SK-N-SH (cell line): ENCODE measurements at regions of chr1 and their contacts with region 1.

Region 1: DNA sequence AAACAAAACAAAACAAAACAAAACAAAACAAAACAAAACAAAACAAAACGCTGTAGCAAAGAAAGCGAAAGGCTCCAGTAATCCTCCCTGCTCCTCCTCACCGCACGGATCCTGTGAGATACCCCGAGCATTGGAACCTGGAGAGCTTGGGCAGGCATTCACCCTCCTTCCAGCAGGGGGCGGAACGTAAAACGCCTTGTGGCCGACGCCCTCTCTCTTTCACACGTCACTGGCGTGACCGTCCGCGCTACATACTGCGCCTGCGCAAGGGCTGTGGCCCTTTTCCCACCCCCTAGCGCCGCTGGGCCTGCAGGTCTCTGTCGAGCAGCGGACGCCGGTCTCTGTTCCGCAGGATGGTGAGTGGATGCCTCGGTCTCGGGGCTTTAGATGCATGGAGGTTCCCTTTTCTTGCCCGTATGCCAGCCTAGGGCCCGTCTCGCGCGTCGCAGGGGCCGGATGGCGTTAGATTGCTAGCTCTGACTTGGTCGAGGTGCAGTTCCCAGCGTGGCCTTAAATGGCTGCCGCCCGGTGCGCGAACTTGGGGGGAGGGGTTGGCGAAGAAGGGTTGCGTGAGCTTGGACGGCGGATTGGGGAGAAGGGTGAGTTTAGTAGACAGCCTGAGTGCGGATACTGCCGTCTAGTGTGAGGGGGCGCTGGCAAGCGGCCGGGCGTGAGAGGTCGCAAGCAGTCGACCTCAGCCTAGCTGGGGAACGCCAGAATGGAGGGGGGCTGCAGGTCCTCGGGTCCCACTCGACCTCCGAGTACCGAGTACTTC is at the start of gene RPL5:
- DNase-seq: peak; percentile 95
- H3K4me3 ChIP-seq: peak within 1 kb of the TSS; percentile 94 to 99
- H3K27ac ChIP-seq: peak within 1 kb of the TSS; percentile 74 to 97
- H3K4me1 ChIP-seq: peaks cover 15 to 35% of the 10 kb centered on the region in 2 experiments; a peak in 3 of 4 replicates
- H3K27me3 ChIP-seq: no peaks in the 10 kb centered on the region
- CTCF ChIP-seq: peak; percentile 93
- EP300 ChIP-seq: no peak
- RAD21 ChIP-seq: peak; percentile 27; the same call in 1 of the 2 replicates
- polyA plus RNA-seq, gene RPL5: 1,489 and 2,038 TPM in 2 replicates

Region 2: GRCh38 chr1:92764116-92764515 is 67.8 kb before region 1 on chr1:
- CTCF ChIA-PET with region 1: no interaction called
- POLR2A ChIA-PET with region 1: no interaction called
- DNase-seq: no peak
- H3K4me3 ChIP-seq: no peak overlapping the region
- H3K27ac ChIP-seq: no peak overlapping the region
- H3K4me1 ChIP-seq: no peaks in the 10 kb centered on the region
- H3K27me3 ChIP-seq: no peaks in the 10 kb centered on the region
- CTCF ChIP-seq: no peak
- EP300 ChIP-seq: no peak
- RAD21 ChIP-seq: no peak

Region 3: GRCh38 chr1:92784639-92785500 is 47.1 kb before region 1 on chr1 and contains the start of gene EVI5:
- CTCF ChIA-PET with region 1: interaction called, 18 read pairs
- POLR2A ChIA-PET with region 1: interaction called, 13 read pairs
- DNase-seq: peak; percentile 96
- H3K4me3 ChIP-seq: peak within 1 kb of the TSS; percentile 70 to 79
- H3K27ac ChIP-seq: peak within 1 kb of the TSS; percentile 79 to 97
- H3K4me1 ChIP-seq: peaks cover 0 to 3% of the 10 kb centered on the region in 2 experiments; a peak in 1 of 4 replicates
- H3K27me3 ChIP-seq: no peaks in the 10 kb centered on the region
- CTCF ChIP-seq: no peak
- EP300 ChIP-seq: no peak
- RAD21 ChIP-seq: no peak
- polyA plus RNA-seq, gene EVI5: 5.7 and 6.2 TPM in 2 replicates

Region 4: DNA sequence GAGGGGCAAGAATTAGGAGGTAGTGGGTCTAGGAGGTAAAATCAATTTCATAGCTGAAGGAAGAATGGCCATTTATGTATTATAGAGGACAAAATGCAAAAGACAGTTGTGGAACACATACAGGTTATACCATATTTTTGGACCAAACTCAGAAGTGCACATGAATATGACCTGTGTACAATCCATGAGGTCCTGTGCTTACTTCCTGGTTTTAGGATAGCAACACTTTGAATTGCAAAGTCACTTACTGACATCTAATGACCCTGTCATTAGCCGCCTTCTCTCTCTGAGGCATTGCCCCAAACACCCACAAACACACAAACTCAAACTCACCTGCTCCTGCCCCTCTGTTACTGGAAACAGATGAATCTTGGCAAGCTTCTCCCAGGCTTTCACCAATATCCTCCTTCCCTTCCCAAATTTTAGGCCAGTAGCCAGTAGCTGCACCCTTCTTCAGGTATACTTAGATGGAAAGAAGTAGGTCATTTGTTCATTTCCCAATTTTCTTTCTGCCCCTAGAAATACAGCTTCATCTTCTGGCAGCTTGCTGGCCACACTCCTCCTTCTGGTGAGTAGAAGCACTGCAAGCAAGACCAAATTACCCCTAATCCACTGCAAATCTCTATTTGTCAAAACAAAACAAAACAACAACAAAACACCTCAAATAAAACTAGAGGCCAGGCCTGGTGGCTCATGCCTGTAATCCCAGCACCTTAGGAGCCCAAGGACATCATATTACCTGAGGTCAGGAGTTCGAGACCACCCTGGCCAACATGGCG is 13.8 kb before region 1 on chr1:
- CTCF ChIA-PET with region 1: interaction called, 17 read pairs
- POLR2A ChIA-PET with region 1: interaction called, 8 read pairs
- DNase-seq: peak; percentile 38
- H3K4me3 ChIP-seq: no peak overlapping the region; a peak in 1 of 4 replicates
- H3K27ac ChIP-seq: no peak overlapping the region
- H3K4me1 ChIP-seq: no peaks in the 10 kb centered on the region
- H3K27me3 ChIP-seq: no peaks in the 10 kb centered on the region
- CTCF ChIP-seq: peak; percentile 65
- EP300 ChIP-seq: no peak
- RAD21 ChIP-seq: peak; percentile 61

Region 5: GRCh38 chr1:92843429-92844352 is 11.7 kb after region 1 on chr1:
- CTCF ChIA-PET with region 1: interaction called, 12 read pairs
- POLR2A ChIA-PET with region 1: interaction called, 6 read pairs
- DNase-seq: no peak
- H3K4me3 ChIP-seq: no peak overlapping the region
- H3K27ac ChIP-seq: no peak overlapping the region
- H3K4me1 ChIP-seq: peaks cover 0 to 3% of the 10 kb centered on the region in 2 experiments; a peak in 1 of 4 replicates
- H3K27me3 ChIP-seq: no peaks in the 10 kb centered on the region
- CTCF ChIP-seq: no peak
- EP300 ChIP-seq: no peak
- RAD21 ChIP-seq: no peak